Panc1 (cell line): ENCODE measurements at regions of chr14 and their contacts with region 1.

Region 1: DNA sequence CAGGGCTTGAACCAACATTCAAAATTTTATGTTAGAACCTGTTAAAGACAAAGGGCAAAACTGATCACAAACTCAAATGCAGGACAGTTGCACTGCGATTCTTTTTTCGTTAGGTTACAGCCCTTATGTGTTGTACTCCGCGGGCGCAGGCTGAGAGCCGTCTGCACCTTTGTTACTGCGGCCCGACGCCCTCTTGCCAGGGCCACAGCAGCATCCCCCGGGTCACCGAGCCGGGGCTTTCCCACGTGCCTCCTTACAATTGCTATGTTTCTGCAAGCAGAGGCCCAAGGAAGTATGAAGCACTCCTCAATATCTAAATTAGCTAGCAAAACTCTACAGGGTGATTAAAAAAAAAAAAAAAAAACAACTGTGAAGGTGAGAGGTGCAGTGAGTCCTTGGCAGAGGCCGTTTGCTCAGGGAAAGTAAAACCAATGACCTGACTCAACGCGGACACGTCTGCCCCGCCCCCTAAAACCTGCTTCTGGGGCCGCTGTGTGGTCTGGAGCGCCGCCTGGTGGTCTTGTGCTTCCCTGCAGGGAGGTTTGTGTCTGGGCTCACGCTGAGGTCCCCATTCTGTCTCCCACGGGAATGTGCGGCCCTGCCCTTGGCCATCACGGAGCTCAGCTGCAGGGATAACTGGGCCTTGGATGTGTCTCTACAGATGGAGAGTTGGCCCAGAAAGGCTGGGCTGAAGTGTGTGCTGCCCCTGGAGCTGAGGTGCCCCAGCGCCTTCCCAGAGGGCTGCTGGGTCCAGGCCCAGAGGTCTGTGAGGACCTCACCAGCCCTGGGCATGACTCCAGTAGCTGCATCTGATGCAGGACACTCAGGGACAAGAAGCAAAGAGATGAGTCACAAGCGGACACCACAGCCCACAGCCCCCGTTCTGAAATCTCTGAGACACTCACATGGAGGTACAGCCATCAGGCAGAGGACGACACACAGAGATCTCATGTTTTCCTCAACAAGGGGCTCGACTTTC is 418.5 kb downstream of the TMEM121 start:
- DNase-seq: peak; percentile 8
- ATAC-seq: peak; percentile 92
- H3K4me3 ChIP-seq: peak overlapping the region in 1 of 2 experiments; percentile 14; a peak in 1 of 4 replicates
- H3K27ac ChIP-seq: no peak overlapping the region
- H3K4me1 ChIP-seq: no peaks in the 10 kb centered on the region
- H3K27me3 ChIP-seq: no peaks in the 10 kb centered on the region
- CTCF ChIP-seq: peak; percentile 93

Region 2: GRCh38 chr14:105999361-106000028 is 54.6 kb after region 1 on chr14:
- CTCF ChIA-PET with region 1: no interaction called
- POLR2A ChIA-PET with region 1: no interaction called
- in situ Hi-C with region 1: no loop called
- intact Hi-C with region 1: loop called (anchors 10 kb)
- DNase-seq: no peak
- ATAC-seq: no peak
- H3K4me3 ChIP-seq: no peak overlapping the region
- H3K27ac ChIP-seq: no peak overlapping the region
- H3K4me1 ChIP-seq: no peaks in the 10 kb centered on the region
- H3K27me3 ChIP-seq: no peaks in the 10 kb centered on the region
- CTCF ChIP-seq: peak; percentile 20; the same call in 1 of the 2 replicates